ENCODE measurements at regions of chr1 and their contacts with region 1.

Region 1: GRCh38 chr1:44819608-44820327 is 11.4 kb downstream of the BTBD19 start:
- DNase-seq: peak; percentile 83
- H3K4me3 ChIP-seq: peak overlapping the region; percentile 59
- CTCF ChIP-seq: no peak

Region 2: DNA sequence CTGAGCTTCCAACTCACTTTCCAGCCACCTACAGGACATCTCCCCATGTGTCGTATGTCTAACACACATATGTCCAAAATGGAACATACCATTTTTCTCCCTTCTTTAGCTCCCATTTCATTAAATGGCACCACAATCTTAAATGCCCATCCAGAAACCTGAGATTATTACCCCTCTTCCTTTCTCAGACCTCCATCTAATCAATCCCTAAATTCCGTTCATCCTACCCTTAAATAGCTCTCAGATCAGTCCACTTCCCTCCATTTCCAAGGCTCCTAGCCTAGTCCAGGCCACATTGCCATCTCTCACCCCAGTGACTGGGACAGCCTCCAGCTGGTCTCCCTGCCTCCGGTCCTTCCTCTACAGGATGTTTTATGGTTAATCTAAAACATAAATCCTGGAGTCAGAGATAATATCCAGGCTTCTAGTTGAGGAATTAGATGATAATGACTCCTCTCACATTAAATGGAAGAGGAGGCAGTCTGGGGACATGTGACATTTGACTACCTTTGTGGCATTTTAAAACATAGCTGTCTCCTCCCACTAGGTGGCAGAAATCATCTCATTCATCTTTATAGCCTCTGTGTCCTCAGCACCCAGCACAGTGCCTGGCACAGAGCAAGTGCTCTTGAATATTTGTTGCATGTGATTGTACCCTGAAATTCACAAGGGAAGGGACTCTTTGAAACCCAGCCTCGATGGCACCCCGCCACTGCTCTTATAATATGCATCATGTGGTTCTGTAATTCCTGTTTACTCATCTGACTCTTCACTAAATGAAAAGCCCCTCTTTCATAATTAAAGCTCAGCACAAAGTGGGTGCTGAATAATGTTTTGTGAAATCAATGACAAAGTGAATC is 247.8 kb before region 1 on chr1:
- CTCF ChIA-PET with region 1: no interaction called
- POLR2A ChIA-PET with region 1: no interaction called
- DNase-seq: no peak
- H3K4me3 ChIP-seq: no peak overlapping the region
- CTCF ChIP-seq: peak; percentile 24

Region 3: GRCh38 chr1:44807262-44808062 is 12.3 kb before region 1 on chr1 and contains the start of gene DYNLT4:
- CTCF ChIA-PET with region 1: interaction called, 8 read pairs
- POLR2A ChIA-PET with region 1: interaction called, 78 read pairs
- DNase-seq: peak; percentile 98
- H3K4me3 ChIP-seq: peak within 1 kb of the TSS; percentile 33
- CTCF ChIP-seq: no peak